ENCODE measurements at regions of chr2 and their contacts with region 1.

Region 1: DNA sequence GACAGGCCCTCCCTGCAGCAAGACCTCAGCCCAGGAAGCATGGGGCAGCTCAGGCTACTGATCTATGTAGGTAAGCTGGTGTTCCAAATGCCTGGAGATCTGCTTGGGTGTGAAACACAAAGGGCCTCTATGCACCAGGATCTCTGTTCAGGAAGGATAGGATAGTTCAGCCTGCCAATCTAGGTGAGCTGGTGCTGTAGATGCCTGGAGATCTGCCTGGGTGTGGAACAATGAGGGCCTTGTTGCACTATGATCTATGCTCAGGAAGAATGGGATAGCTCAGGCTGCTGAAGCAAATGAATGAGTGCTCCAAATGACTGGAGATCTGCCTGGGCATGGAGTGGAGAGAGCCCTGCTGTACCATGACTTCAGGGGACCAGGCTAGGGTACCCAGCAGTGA is 48.9 kb upstream of the MYL1 start:
- DNase-seq: no peak
- H3K4me3 ChIP-seq: no peak overlapping the region
- H3K27ac ChIP-seq: no peak overlapping the region
- H3K4me1 ChIP-seq: no peaks in the 10 kb centered on the region
- H3K27me3 ChIP-seq: no peaks in the 10 kb centered on the region
- CTCF ChIP-seq: no peak
- EP300 ChIP-seq: no peak
- POLR2A ChIP-seq: no peak

Region 2: DNA sequence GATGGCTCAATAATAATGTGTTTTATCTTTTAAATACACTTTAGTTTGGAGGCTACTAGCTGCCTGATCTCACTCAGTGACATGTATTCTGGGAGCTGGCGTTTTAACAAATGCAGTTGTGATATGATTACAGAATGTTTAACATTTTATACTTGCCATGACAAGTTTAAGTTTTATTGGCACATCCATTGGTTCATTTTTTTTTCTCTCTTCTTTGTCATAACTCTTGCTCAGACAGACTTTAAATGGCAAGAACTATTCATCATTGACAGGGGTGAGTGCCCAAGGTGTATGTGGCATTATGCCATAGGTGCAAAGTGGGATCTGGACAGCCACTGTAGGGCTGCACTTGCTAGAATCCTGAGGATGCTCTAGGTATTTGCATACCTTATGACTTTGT is 23.2 kb after region 1 on chr2:
- intact Hi-C with region 1: loop called in 1 of 4 experiments (anchors 2 kb)
- DNase-seq: no peak
- H3K4me3 ChIP-seq: no peak overlapping the region
- H3K27ac ChIP-seq: no peak overlapping the region
- H3K4me1 ChIP-seq: no peaks in the 10 kb centered on the region
- H3K27me3 ChIP-seq: no peaks in the 10 kb centered on the region
- CTCF ChIP-seq: no peak
- EP300 ChIP-seq: no peak
- POLR2A ChIP-seq: no peak